ENCODE measurements at regions of chr6 and their contacts with region 1.

Region 1: GRCh38 chr6:90285611-90286381 is 10.8 kb downstream of the BACH2 start:
- DNase-seq: peak; percentile 75
- H3K4me3 Mint-ChIP-seq: peak overlapping the region; percentile 63
- H3K27ac Mint-ChIP-seq: peak overlapping the region; percentile 81
- H3K4me1 Mint-ChIP-seq: peaks cover 62% of the 10 kb centered on the region
- H3K27me3 Mint-ChIP-seq: peaks cover 12% of the 10 kb centered on the region

Region 2: GRCh38 chr6:89940225-89941027 is 345.4 kb before region 1 on chr6:
- CTCF ChIA-PET with region 1: interaction called, 42 read pairs
- POLR2A ChIA-PET with region 1: interaction called, 7 read pairs
- DNase-seq: peak; percentile 80
- H3K4me3 Mint-ChIP-seq: no peak overlapping the region
- H3K27ac Mint-ChIP-seq: no peak overlapping the region
- H3K4me1 Mint-ChIP-seq: peaks cover 22% of the 10 kb centered on the region
- H3K27me3 Mint-ChIP-seq: no peaks in the 10 kb centered on the region

Region 3: GRCh38 chr6:90219209-90219985 is 66.4 kb before region 1 on chr6:
- CTCF ChIA-PET with region 1: interaction called, 3 read pairs
- POLR2A ChIA-PET with region 1: interaction called, 14 read pairs
- DNase-seq: no peak
- H3K4me3 Mint-ChIP-seq: no peak overlapping the region
- H3K27ac Mint-ChIP-seq: no peak overlapping the region
- H3K4me1 Mint-ChIP-seq: peaks cover 12% of the 10 kb centered on the region
- H3K27me3 Mint-ChIP-seq: no peaks in the 10 kb centered on the region

Region 4: DNA sequence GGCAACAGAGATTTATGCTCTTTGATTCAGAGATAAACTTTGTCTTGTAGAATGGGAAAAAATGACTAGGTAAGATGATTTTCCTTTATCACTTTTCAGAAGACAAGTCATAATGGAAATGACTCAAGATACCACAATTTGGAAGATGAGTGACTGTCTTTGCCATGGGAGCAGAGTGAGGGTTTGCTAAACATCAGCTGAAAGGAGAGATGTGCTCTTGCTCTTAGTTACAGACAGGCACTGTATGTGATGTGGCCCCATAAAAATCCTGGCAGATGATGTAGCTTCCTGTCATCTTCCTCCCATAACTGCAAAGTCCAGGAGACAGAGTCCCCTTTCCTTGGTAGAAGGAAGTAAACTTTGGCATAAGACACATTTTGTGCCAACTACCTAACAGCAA is 36.8 kb before region 1 on chr6:
- CTCF ChIA-PET with region 1: no interaction called
- POLR2A ChIA-PET with region 1: no interaction called
- DNase-seq: no peak
- H3K4me3 Mint-ChIP-seq: no peak overlapping the region
- H3K27ac Mint-ChIP-seq: no peak overlapping the region
- H3K4me1 Mint-ChIP-seq: peaks cover 31% of the 10 kb centered on the region
- H3K27me3 Mint-ChIP-seq: no peaks in the 10 kb centered on the region

Region 5: GRCh38 chr6:90274451-90275030 is 11.3 kb before region 1 on chr6:
- CTCF ChIA-PET with region 1: interaction called, 23 read pairs
- POLR2A ChIA-PET with region 1: interaction called, 57 read pairs
- DNase-seq: peak; percentile 86
- H3K4me3 Mint-ChIP-seq: peak overlapping the region; percentile 32
- H3K27ac Mint-ChIP-seq: peak overlapping the region; percentile 58
- H3K4me1 Mint-ChIP-seq: peaks cover 51% of the 10 kb centered on the region
- H3K27me3 Mint-ChIP-seq: peaks cover 10% of the 10 kb centered on the region

Region 6: GRCh38 chr6:90393232-90393884 is 107.6 kb after region 1 on chr6:
- CTCF ChIA-PET with region 1: interaction called, 22 read pairs
- POLR2A ChIA-PET with region 1: interaction called, 19 read pairs
- DNase-seq: peak; percentile 80
- H3K4me3 Mint-ChIP-seq: no peak overlapping the region
- H3K27ac Mint-ChIP-seq: peak overlapping the region; percentile 60
- H3K4me1 Mint-ChIP-seq: peaks cover 60% of the 10 kb centered on the region
- H3K27me3 Mint-ChIP-seq: peaks cover 8% of the 10 kb centered on the region

Region 7: GRCh38 chr6:90413867-90414266 is 128.1 kb after region 1 on chr6:
- CTCF ChIA-PET with region 1: interaction called, 4 read pairs
- POLR2A ChIA-PET with region 1: interaction called, 26 read pairs
- DNase-seq: peak; percentile 88
- H3K4me3 Mint-ChIP-seq: peak overlapping the region; percentile 82
- H3K27ac Mint-ChIP-seq: peak overlapping the region; percentile 97
- H3K4me1 Mint-ChIP-seq: peaks cover 86% of the 10 kb centered on the region
- H3K27me3 Mint-ChIP-seq: peaks cover 2% of the 10 kb centered on the region

Region 8: DNA sequence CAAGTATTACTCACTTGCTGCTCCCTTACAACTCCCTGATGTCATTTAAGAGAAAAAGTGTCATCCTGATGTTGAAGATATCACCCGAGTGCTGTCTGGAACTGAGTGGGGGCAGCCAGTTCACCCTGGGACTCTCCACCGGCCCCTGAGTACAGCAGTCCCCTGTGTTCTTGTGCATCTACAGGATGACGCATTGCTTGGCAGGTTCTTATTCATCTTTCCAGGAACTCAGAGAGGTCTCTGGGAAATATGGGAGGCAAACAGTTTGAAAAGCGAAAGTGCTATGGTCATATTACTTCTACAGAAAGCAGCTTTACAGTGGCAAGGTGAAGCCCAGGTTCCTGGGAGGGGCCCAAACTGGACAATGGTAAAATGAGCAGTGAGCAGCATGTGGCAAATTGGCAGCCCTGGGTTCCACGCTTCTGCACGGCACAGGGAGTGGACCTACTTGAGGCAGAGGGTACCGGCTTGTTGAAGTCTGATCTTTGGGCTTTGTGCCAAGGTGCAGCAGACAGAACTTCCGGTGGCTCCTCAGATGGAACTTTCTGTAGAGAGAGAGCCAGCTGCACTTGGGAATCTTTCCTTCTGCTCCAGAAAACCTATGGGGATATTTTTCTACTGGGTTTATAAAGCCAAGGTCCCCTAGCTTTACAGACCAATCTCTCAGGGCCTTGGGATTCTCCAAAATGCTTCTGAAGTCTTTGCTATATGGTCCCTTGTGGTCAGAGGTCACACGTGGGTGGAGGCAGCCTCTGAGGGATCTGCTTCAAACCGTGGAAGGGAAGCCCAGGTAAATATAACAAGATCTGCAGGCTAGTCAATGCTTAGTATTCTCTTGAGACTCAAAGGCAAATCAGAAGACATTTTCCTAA is 172.8 kb after region 1 on chr6:
- CTCF ChIA-PET with region 1: interaction called, 5 read pairs
- POLR2A ChIA-PET with region 1: interaction called, 28 read pairs
- DNase-seq: peak; percentile 82
- H3K4me3 Mint-ChIP-seq: peak overlapping the region; percentile 56
- H3K27ac Mint-ChIP-seq: peak overlapping the region; percentile 89
- H3K4me1 Mint-ChIP-seq: peaks cover 74% of the 10 kb centered on the region
- H3K27me3 Mint-ChIP-seq: no peaks in the 10 kb centered on the region